Activated CD4-positive, alpha-beta T cell treated with anti-CD3 and anti-CD28 coated beads for 36 hours (primary cell): ENCODE measurements at regions of chr19 and their contacts with region 1.

Region 1: DNA sequence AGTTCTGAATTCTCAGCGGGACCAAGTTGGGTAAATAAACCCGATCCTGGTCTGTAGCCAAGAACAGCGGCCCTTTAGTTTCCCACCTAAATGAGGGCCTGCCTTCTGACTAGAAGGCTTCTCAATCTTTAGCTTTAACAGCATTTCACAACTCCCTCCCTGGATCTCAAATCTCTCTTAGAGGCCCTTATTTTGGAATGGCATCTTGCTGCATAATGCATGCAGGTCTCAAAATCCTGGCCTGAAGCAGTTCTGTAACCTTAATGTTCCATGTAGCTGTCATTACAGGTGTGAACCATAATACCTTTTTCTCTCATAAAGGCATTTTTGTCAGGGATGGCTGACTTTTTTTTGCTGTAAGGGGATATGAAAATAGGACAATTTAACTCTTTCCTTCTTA is 29.5 kb downstream of the ZNF90 start:
- DNase-seq: no peak
- ATAC-seq: no peak
- H3K4me3 Mint-ChIP-seq: no peak overlapping the region
- H3K27ac Mint-ChIP-seq: no peak overlapping the region
- H3K4me1 Mint-ChIP-seq: no peaks in the 10 kb centered on the region
- H3K27me3 Mint-ChIP-seq: no peaks in the 10 kb centered on the region

Region 2: GRCh38 chr19:19719798-19720197 is 387.5 kb before region 1 on chr19:
- CTCF ChIA-PET with region 1: no interaction called
- POLR2A ChIA-PET with region 1: no interaction called
- intact Hi-C with region 1: loop called in 1 of 2 experiments (anchors 10 kb)
- DNase-seq: no peak
- ATAC-seq: no peak
- H3K4me3 Mint-ChIP-seq: no peak overlapping the region
- H3K27ac Mint-ChIP-seq: no peak overlapping the region
- H3K4me1 Mint-ChIP-seq: peaks cover 3% of the 10 kb centered on the region
- H3K27me3 Mint-ChIP-seq: no peaks in the 10 kb centered on the region

Region 3: GRCh38 chr19:20005766-20006165 is 101.5 kb before region 1 on chr19:
- CTCF ChIA-PET with region 1: no interaction called
- POLR2A ChIA-PET with region 1: no interaction called
- intact Hi-C with region 1: no loop called
- DNase-seq: no peak
- ATAC-seq: no peak
- H3K4me3 Mint-ChIP-seq: no peak overlapping the region
- H3K27ac Mint-ChIP-seq: no peak overlapping the region
- H3K4me1 Mint-ChIP-seq: no peaks in the 10 kb centered on the region
- H3K27me3 Mint-ChIP-seq: no peaks in the 10 kb centered on the region